Esophagus muscularis mucosa (tissue), 4 donors: ENCODE measurements at regions of chr10 and their contacts with region 1.

Region 1: DNA sequence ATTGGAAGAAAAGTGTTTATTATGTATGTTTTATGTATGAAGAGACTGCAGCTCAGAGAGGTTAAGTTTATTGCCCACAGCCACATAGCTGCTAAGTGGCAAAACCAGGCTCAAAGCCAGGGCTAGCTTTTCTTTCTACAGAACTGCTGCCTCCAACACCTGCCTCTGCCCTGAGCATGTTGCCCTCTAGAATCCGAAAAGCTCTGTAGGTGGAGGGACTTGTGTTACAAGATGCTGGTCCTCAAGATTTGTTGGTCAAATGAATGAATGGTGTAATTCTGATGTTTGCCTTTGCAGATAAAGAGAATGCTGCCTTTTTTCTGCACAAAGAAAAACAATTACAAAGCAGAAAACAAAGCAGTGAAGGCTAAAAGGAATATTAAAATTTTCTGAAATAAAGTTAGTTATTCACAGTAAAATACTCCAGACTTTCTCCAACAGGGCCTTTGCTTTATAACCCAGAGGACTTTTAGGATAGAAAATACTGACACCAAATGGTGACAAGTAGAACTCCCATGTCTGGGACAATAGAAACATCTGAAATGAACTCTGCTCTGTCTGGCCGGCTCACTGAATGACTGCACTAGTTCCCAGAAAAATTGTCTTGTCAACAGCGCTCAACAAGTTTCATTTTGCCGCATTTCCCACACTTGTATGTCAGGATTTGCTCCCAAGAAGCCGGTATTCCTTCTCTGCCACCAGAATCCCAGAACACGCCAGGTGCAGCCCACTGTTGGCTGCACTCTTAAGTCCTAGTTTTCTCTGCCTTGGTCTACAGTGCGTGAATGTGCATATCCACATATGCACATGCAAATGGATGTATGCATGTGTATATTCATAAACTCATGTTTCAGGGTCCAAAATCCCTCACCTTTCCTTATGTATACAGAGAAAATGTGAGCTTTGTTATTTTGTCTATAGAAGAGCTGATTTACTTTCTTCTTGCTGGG is 11.0 kb upstream of the DNTT start:
- DNase-seq: no peak
- H3K4me3 ChIP-seq: no peak overlapping the region
- H3K27ac ChIP-seq: no peak overlapping the region
- H3K4me1 ChIP-seq: peaks cover 0 to 2% (median 1%) of the 10 kb centered on the region in 4 donors
- H3K27me3 ChIP-seq: no peaks in the 10 kb centered on the region
- CTCF ChIP-seq: peak; percentile 58 to 64 (median 63)
- EP300 ChIP-seq: no peak
- POLR2A ChIP-seq: no peak

Region 2: GRCh38 chr10:95116869-95117269 is 1176.4 kb before region 1 on chr10:
- intact Hi-C with region 1: no loop called
- DNase-seq: no peak
- H3K4me3 ChIP-seq: no peak overlapping the region
- H3K27ac ChIP-seq: no peak overlapping the region
- H3K4me1 ChIP-seq: no peaks in the 10 kb centered on the region
- H3K27me3 ChIP-seq: peaks cover 0 to 5% (median 0%) of the 10 kb centered on the region in 4 donors
- CTCF ChIP-seq: no peak
- EP300 ChIP-seq: no peak
- POLR2A ChIP-seq: no peak

Region 3: DNA sequence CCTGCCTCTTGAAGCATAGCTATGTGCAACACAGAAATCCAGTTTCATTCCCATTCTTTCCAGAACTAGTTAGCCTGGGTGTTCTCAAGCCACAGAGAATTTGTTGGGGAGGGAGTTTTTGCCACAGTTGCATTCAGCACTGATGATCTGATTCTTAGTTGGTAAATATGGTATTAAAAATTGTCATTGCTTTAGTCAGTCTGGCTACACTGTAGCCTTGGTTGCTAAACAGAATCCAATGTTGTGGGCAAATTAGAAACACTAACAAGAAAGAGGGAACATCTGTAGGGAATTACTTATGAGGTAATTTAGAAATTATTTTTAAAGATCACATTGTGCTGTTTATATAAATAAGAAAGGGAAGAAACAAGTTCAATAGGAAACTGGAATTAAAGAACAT is 442.5 kb before region 1 on chr10:
- intact Hi-C with region 1: no loop called
- DNase-seq: no peak
- H3K4me3 ChIP-seq: no peak overlapping the region
- H3K27ac ChIP-seq: no peak overlapping the region
- H3K4me1 ChIP-seq: no peaks in the 10 kb centered on the region
- H3K27me3 ChIP-seq: no peaks in the 10 kb centered on the region
- CTCF ChIP-seq: no peak
- EP300 ChIP-seq: no peak
- POLR2A ChIP-seq: no peak

Region 4: DNA sequence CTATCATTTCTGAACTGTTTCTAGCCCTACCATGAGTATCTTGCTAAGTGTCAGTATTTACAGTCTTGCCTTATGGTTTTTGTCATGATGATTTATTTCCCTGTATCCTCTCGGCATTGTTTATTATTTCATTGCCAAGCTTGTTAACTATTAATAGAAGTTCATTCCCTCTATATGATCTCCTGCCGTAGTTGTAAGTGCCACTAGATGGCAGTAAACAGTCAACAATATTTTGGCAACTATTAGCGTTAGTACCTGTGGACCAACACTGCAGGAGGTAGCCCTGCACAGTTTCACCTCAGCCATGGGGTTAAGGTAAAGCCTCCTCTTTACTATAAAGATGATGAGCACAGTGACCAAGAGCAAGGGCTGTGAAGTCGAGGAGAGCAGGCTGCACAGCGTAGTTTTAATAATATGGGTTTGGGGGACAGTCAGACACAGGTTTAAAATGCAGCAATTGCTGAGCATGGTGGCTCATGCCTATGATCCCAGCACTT is 276.0 kb before region 1 on chr10:
- intact Hi-C with region 1: loop called (anchors 5 kb)
- DNase-seq: no peak
- H3K4me3 ChIP-seq: no peak overlapping the region
- H3K27ac ChIP-seq: no peak overlapping the region
- H3K4me1 ChIP-seq: peaks cover 0 to 7% (median 3%) of the 10 kb centered on the region in 4 donors
- H3K27me3 ChIP-seq: no peaks in the 10 kb centered on the region
- CTCF ChIP-seq: peak; percentile 58 to 78 (median 60)
- EP300 ChIP-seq: no peak
- POLR2A ChIP-seq: no peak

Region 5: DNA sequence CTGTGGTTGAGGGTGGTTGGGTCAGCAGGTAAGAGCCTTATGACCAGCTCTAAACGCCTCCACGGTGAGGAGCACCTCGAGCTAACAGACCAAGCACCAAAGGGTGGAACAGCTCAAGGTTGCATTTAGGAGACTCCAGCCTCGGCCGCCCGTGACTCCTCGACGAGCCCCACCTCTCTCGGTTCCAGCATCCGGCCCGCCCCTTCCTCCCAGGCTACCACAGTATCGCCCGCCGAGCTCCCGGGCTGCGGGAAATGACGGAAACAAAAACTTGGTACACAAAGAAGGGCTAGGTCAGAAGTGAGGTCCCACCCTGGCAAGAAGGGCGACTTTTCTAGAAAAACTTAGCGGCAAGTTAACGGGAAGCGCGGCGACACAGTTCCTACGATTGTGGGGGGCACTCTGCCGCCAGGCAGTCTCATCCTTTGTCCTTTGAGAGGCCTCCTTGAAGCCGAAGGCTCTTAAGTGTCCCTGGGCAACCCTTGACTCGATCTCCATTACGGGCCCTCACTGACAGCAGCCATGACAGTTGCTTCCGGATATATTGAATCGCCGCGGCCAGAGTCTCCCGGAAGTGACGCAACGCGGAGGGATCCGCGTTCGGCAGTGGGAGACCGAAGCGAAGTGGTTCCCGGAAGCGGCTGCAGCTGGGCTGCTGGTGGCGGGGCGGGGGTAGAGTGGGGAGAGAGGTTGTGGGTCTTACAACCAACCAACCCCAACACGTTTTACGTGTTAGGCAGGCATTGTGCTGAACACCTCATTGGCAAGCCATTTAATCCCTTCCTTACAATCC is 203.4 kb before region 1 on chr10:
- intact Hi-C with region 1: no loop called
- DNase-seq: peak; percentile 98
- H3K4me3 ChIP-seq: peak overlapping the region; percentile 73 to 91 (median 82)
- H3K27ac ChIP-seq: peak overlapping the region; percentile 88 to 94 (median 89)
- H3K4me1 ChIP-seq: peaks cover 0 to 12% (median 12%) of the 10 kb centered on the region in 4 donors
- H3K27me3 ChIP-seq: peaks cover 0 to 29% (median 7%) of the 10 kb centered on the region in 4 donors
- CTCF ChIP-seq: no peak
- EP300 ChIP-seq: no peak
- POLR2A ChIP-seq: no peak

Region 6: GRCh38 chr10:96229568-96230030 is 63.6 kb before region 1 on chr10:
- intact Hi-C with region 1: loop called (anchors 2 kb)
- DNase-seq: no peak
- H3K4me3 ChIP-seq: no peak overlapping the region
- H3K27ac ChIP-seq: no peak overlapping the region
- H3K4me1 ChIP-seq: no peaks in the 10 kb centered on the region
- H3K27me3 ChIP-seq: no peaks in the 10 kb centered on the region
- CTCF ChIP-seq: peak; percentile 66 to 84 (median 77)
- EP300 ChIP-seq: no peak
- POLR2A ChIP-seq: no peak

Region 7: DNA sequence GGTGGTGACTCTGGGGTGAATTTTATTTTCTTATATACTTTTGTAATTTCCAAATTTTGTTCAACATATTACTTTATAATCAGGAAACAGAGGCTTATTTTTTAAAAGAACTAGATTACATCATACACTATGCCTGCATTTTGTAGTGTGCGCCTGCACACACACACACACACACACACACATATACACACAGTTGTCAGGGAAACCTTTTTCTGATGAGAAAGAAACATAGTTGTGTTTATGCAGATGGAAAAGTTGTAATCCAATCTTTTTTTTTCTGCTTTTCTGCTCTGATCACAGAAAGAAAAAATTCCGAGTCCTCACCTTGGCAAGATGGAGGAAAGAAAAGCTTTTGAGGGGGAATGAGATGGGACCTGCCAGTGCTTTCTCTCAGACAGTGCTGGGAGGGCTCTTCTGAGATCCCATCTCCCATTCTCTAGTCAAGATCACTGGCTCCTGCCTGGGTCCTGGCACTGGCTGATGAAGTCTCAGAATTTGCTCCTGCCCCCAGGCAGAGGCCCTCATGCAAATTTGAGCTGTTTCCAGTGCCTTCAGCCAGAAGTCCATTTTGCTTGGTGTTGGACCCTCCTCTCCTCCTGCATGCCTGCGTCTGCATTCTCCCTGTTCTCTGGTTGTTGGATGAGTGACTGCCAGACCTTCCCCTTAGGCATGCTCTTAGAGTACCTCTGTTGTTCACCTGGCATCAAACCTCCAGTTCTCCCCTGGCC is 160.8 kb after region 1 on chr10:
- intact Hi-C with region 1: no loop called
- DNase-seq: no peak
- H3K4me3 ChIP-seq: no peak overlapping the region
- H3K27ac ChIP-seq: no peak overlapping the region
- H3K4me1 ChIP-seq: no peaks in the 10 kb centered on the region
- H3K27me3 ChIP-seq: peaks cover 0 to 7% (median 0%) of the 10 kb centered on the region in 4 donors
- CTCF ChIP-seq: no peak
- EP300 ChIP-seq: no peak
- POLR2A ChIP-seq: no peak